AG04449 (cell line): ENCODE measurements at regions of chr1 and their contacts with region 1.

Region 1: GRCh38 chr1:78617615-78618026 is 2.6 kb upstream of the IFI44L start:
- DNase-seq: peak; percentile 36
- H3K4me3 ChIP-seq: no peak overlapping the region
- CTCF ChIP-seq: peak; percentile 65

Region 2: DNA sequence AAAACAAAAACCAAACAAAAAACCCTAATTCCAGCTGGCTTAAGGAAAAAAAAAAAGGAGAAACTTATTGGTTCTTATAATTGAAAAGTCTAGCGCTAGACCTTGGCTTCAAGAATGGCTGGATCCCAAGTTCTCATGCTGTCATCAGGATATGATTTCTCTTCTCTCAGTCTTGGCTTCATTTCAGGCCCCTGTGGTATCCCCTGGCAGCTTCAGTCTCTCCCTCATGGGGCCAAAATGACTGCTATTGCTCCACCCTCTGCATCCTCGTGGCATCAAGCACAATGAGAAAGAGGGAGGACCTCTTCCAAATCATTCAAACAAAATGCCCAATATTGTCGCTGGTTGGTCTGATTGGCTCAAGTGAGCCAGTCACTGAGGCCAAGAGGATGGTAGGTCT is 491.1 kb before region 1 on chr1:
- CTCF ChIA-PET with region 1: interaction called, 19 read pairs
- POLR2A ChIA-PET with region 1: no interaction called
- DNase-seq: no peak
- H3K4me3 ChIP-seq: no peak overlapping the region
- CTCF ChIP-seq: no peak

Region 3: GRCh38 chr1:78132174-78132947 is 485.3 kb before region 1 on chr1:
- CTCF ChIA-PET with region 1: interaction called, 19 read pairs
- POLR2A ChIA-PET with region 1: no interaction called
- DNase-seq: no peak
- H3K4me3 ChIP-seq: no peak overlapping the region
- CTCF ChIP-seq: no peak

Region 4: DNA sequence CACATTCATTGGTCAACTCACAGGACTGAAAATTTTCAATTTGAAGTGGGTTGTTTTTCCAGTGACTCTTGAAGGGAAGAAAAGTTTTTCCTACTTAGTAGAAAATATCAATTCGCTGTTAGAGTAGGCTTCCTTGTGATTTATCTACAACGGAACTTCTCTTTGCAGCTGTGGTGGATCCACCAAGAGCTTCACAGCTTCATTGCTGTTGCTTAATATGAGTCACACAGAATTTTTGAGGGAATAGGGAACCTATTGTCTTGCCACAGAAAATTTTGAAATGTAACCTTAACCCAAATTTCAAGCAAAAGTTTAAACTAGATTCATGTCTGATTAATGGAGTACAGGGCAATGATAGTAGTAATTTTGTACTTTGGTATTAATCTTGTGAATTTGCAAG is 55.8 kb before region 1 on chr1:
- CTCF ChIA-PET with region 1: no interaction called
- POLR2A ChIA-PET with region 1: no interaction called
- DNase-seq: no peak
- H3K4me3 ChIP-seq: no peak overlapping the region
- CTCF ChIP-seq: no peak

Region 5: GRCh38 chr1:78607334-78607927 is 10.2 kb before region 1 on chr1:
- CTCF ChIA-PET with region 1: interaction called, 18 read pairs
- POLR2A ChIA-PET with region 1: no interaction called
- DNase-seq: no peak
- H3K4me3 ChIP-seq: no peak overlapping the region
- CTCF ChIP-seq: peak; percentile 23

Region 6: DNA sequence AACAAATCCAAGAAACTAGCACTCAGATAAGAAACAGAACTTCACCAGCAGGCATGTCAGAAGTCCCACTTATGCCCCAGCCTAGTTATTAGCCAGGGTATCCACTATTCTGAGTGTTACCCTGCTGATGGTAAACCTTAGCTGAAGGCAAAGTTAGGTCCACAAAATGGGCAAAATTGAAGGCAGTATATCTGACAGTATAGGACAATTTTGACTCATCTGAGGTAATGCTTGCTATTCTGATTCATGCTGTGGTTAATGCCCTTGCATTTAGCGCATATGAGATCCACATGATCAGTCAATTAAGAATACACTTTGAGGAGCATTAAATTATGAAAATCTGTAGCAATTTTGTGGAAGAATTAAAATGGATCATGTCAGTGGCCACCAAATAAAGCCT is 47.1 kb after region 1 on chr1:
- CTCF ChIA-PET with region 1: interaction called, 21 read pairs
- POLR2A ChIA-PET with region 1: no interaction called
- DNase-seq: no peak
- H3K4me3 ChIP-seq: no peak overlapping the region
- CTCF ChIP-seq: no peak

Region 7: GRCh38 chr1:78676347-78676982 is 58.8 kb after region 1 on chr1:
- CTCF ChIA-PET with region 1: interaction called, 43 read pairs
- POLR2A ChIA-PET with region 1: no interaction called
- DNase-seq: peak; percentile 12
- H3K4me3 ChIP-seq: no peak overlapping the region
- CTCF ChIP-seq: peak; percentile 37

Region 8: DNA sequence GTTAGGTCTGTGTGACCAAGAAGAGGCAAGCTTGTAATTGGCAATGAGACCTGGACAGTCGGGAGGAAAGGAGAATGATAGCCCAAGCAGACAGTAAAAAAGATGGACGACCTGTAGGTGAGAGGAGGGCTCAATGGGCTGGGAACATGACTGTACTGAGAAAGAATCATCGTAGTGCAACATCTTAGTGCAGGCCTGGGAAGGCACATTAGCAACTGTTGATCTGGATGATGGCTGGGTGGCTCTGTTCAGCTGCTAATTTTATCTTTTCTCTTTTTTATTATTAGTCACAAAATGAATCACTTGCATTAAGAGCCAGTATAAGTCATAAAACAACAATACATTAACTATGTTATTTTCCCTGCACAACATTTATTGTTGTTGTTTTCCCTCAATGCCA is 64.9 kb after region 1 on chr1:
- CTCF ChIA-PET with region 1: interaction called, 43 read pairs
- POLR2A ChIA-PET with region 1: no interaction called
- DNase-seq: no peak
- H3K4me3 ChIP-seq: no peak overlapping the region
- CTCF ChIP-seq: no peak